HepG2 (cell line): ENCODE measurements at regions of chr9 and their contacts with region 1.

Region 1: GRCh38 chr9:102779356-102779755 is 215.8 kb upstream of the CYLC2 start:
- DNase-seq: no peak
- ATAC-seq: no peak
- H3K4me3 ChIP-seq: no peak overlapping the region
- H3K27ac ChIP-seq: no peak overlapping the region
- H3K4me1 ChIP-seq: no peaks in the 10 kb centered on the region
- H3K27me3 ChIP-seq: no peaks in the 10 kb centered on the region
- CTCF ChIP-seq: no peak
- EP300 ChIP-seq: no peak
- POLR2A ChIP-seq: no peak
- RAD21 ChIP-seq: no peak

Region 2: DNA sequence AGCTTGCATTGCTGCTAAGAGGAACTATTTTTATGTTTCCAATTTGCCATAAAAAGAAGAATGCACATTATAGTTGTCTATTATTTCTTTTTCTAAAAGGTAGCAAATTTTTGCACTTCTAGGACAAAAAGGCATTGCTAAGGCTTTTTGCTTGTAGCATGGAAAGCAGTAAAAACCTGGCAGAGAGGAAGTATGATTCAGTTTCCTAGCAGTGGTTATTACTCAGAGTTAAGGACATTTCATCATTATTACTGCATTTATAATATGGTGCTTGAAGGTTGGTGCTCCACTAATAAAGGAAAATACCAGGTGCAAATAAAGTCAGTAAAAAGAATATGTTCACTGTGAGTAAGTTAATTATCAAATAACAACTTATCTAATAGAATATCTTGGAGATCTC is 1930.6 kb before region 1 on chr9:
- CTCF ChIA-PET with region 1: no interaction called
- POLR2A ChIA-PET with region 1: no interaction called
- in situ Hi-C with region 1: no loop called
- intact Hi-C with region 1: loop called (anchors 5 kb)
- DNase-seq: no peak
- ATAC-seq: no peak
- H3K4me3 ChIP-seq: no peak overlapping the region
- H3K27ac ChIP-seq: no peak overlapping the region
- H3K4me1 ChIP-seq: no peaks in the 10 kb centered on the region
- H3K27me3 ChIP-seq: no peaks in the 10 kb centered on the region
- CTCF ChIP-seq: no peak
- EP300 ChIP-seq: no peak
- POLR2A ChIP-seq: no peak
- RAD21 ChIP-seq: no peak

Region 3: GRCh38 chr9:103169798-103170197 is 390.4 kb after region 1 on chr9:
- CTCF ChIA-PET with region 1: no interaction called
- POLR2A ChIA-PET with region 1: no interaction called
- in situ Hi-C with region 1: no loop called
- intact Hi-C with region 1: no loop called
- DNase-seq: no peak
- ATAC-seq: no peak
- H3K4me3 ChIP-seq: no peak overlapping the region
- H3K27ac ChIP-seq: no peak overlapping the region
- H3K4me1 ChIP-seq: no peaks in the 10 kb centered on the region
- H3K27me3 ChIP-seq: no peaks in the 10 kb centered on the region
- CTCF ChIP-seq: no peak
- EP300 ChIP-seq: no peak
- POLR2A ChIP-seq: no peak
- RAD21 ChIP-seq: no peak

Region 4: GRCh38 chr9:103261951-103262350 is 482.6 kb after region 1 on chr9:
- CTCF ChIA-PET with region 1: no interaction called
- POLR2A ChIA-PET with region 1: no interaction called
- in situ Hi-C with region 1: no loop called
- intact Hi-C with region 1: no loop called
- DNase-seq: no peak
- ATAC-seq: no peak
- H3K4me3 ChIP-seq: no peak overlapping the region
- H3K27ac ChIP-seq: no peak overlapping the region
- H3K4me1 ChIP-seq: no peaks in the 10 kb centered on the region
- H3K27me3 ChIP-seq: no peaks in the 10 kb centered on the region
- CTCF ChIP-seq: no peak
- EP300 ChIP-seq: no peak
- POLR2A ChIP-seq: no peak
- RAD21 ChIP-seq: no peak